HCT116 (cell line): ENCODE measurements at regions of chr2 and their contacts with region 1.

Region 1: DNA sequence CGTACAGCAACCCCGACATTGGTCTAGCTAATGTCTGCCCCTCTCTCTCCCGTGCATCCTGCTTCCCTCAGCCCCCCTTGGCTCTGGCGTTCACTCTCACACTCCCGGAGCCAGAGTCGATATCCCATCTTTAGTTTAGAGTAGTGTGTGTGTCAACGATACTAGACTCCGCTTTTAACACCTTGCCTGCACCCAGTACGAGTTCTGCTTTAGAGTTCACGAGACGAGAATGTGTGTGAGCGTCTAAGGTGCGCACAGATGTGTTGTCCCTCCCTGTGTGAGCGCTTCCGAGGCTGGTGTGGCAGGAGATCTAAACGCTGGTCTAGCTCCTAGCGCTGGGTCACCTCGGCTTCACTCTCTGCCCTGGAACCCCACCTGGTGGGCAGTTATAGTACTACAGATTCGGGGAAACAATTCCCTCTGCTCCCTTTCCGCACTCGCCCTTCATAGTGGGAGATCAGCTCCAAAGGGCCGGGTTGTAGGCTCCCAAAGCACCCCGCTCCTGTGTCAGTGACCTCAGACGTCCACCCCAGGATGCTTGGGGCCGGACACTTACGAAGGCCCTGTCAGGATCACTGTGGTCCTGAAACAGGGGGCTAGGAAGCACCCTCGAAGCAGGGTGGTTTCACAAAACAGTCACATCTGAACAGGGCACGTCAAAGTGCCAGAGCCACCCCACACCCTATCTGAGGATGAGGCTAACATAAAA is 2.6 kb upstream of the CYP26B1 start:
- DNase-seq: peak; percentile 63
- ATAC-seq: peak; percentile 75
- H3K4me3 ChIP-seq: no peak overlapping the region
- H3K27ac ChIP-seq: no peak overlapping the region
- H3K4me1 ChIP-seq: peaks cover 11 to 34% of the 10 kb centered on the region in 2 experiments; a peak in 3 of 4 replicates
- H3K27me3 ChIP-seq: no peaks in the 10 kb centered on the region
- CTCF ChIP-seq: peak; percentile 70 to 86 (median 77)
- POLR2A ChIP-seq: no peak
- RAD21 ChIP-seq: peak; percentile 95

Region 2: GRCh38 chr2:71545572-71546274 is 604.6 kb before region 1 on chr2:
- CTCF ChIA-PET with region 1: interaction called, 10 read pairs
- POLR2A ChIA-PET with region 1: no interaction called
- RAD21 ChIA-PET with region 1: interaction called in 1 of 2 experiments, 4 read pairs
- intact Hi-C with region 1: loop called (anchors 1 kb)
- DNase-seq: peak; percentile 57
- ATAC-seq: peak; percentile 89
- H3K4me3 ChIP-seq: peak overlapping the region; percentile 37 to 53
- H3K27ac ChIP-seq: peak overlapping the region; percentile 4; the same call in 1 of the 2 replicates
- H3K4me1 ChIP-seq: peaks cover 2 to 15% of the 10 kb centered on the region in 2 experiments; a peak in 3 of 4 replicates
- H3K27me3 ChIP-seq: no peaks in the 10 kb centered on the region
- CTCF ChIP-seq: peak; percentile 72 to 87 (median 84)
- POLR2A ChIP-seq: no peak
- RAD21 ChIP-seq: peak; percentile 92

Region 3: GRCh38 chr2:71876542-71877451 is 273.5 kb before region 1 on chr2:
- CTCF ChIA-PET with region 1: interaction called, 7 read pairs
- POLR2A ChIA-PET with region 1: no interaction called
- RAD21 ChIA-PET with region 1: no interaction called
- intact Hi-C with region 1: loop called (anchors 2 kb)
- DNase-seq: no peak
- ATAC-seq: no peak
- H3K4me3 ChIP-seq: no peak overlapping the region
- H3K27ac ChIP-seq: no peak overlapping the region
- H3K4me1 ChIP-seq: peaks cover 23 to 30% of the 10 kb centered on the region in 2 experiments
- H3K27me3 ChIP-seq: no peaks in the 10 kb centered on the region
- CTCF ChIP-seq: no peak
- POLR2A ChIP-seq: no peak
- RAD21 ChIP-seq: no peak

Region 4: DNA sequence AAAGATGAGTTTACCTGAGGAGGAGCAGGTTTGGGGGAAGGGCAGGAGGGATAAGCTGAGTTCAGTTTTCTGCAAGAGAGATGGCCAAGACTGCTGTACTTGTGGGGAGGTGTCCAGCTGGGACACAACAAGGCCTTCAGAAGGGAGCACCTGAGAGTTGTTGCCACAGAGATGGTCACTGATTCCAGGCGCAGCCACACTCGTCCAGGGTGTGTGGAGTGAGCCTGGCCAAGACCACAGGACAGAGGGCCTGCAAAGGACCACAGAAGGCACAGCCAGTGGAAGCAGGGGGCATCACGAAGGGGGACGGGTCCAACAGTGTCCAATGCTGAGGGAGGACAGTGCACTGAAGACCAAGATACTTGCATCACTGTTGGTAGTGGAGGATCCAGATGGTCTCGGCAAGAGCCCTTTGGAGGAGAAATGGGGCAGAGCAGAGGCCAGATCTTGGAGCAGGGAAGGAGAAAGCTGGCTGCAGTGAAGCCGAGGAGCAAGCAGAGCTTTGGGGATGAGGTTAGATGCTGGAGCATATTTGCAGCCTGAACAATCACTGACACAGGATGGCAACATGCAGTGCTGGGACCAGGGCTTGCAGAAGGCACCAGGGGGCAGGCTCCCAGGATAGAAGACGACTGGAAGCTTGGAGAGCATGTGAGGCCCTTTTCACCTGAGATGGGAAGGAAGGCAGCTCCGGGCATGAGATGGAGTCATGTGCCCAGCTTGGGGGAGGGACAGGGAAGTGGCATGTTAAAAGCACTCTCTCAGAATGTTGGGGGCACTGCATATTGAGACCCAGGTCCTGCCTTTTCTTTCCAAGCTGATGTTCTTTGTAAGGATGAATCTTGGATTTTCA is 216.6 kb before region 1 on chr2:
- CTCF ChIA-PET with region 1: interaction called, 15 read pairs
- POLR2A ChIA-PET with region 1: no interaction called
- RAD21 ChIA-PET with region 1: interaction called in 1 of 2 experiments, 5 read pairs
- intact Hi-C with region 1: no loop called
- DNase-seq: peak; percentile 28
- ATAC-seq: peak; percentile 88
- H3K4me3 ChIP-seq: no peak overlapping the region
- H3K27ac ChIP-seq: no peak overlapping the region
- H3K4me1 ChIP-seq: no peaks in the 10 kb centered on the region; a peak in 1 of 4 replicates
- H3K27me3 ChIP-seq: no peaks in the 10 kb centered on the region
- CTCF ChIP-seq: peak; percentile 36 to 59 (median 44); a peak in 4 of 6 replicates
- POLR2A ChIP-seq: no peak
- RAD21 ChIP-seq: peak; percentile 51

Region 5: DNA sequence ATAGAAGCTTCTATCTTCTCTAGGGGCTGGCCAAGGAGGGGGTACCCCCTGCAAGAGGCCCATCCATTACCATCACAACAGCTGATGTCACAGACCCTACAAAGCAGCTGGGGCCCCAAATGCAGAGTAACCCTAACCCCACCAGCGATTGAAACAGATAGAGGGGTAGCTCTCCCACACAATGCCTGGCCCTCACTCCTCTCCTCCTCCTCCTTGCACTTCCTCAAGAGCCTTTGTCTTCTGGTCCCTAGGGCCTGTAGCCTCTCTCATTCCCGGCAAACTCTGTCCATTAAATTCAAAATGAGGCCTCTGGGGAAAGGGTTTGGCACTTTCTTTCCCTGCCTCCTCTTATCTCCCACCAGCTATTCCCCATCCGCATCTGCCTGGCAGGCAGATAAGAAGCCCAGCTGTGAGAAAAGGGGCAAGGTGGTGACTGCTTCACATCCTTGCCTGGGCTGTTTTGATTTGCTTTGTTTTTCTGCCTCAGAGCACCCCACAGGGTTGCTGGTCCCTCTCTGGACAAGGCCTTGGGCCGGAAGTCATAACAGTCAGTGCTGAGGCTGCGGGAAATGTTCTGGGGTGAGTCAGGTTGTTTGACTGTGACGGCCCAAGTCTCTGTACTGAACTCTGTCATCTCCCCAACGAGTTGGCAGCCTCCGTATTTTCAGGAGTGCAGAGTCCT is 23.5 kb after region 1 on chr2:
- CTCF ChIA-PET with region 1: no interaction called
- POLR2A ChIA-PET with region 1: no interaction called
- RAD21 ChIA-PET with region 1: no interaction called
- intact Hi-C with region 1: no loop called
- DNase-seq: no peak
- ATAC-seq: no peak
- H3K4me3 ChIP-seq: no peak overlapping the region
- H3K27ac ChIP-seq: no peak overlapping the region
- H3K4me1 ChIP-seq: no peaks in the 10 kb centered on the region
- H3K27me3 ChIP-seq: no peaks in the 10 kb centered on the region
- CTCF ChIP-seq: no peak
- POLR2A ChIP-seq: no peak
- RAD21 ChIP-seq: no peak

Region 6: DNA sequence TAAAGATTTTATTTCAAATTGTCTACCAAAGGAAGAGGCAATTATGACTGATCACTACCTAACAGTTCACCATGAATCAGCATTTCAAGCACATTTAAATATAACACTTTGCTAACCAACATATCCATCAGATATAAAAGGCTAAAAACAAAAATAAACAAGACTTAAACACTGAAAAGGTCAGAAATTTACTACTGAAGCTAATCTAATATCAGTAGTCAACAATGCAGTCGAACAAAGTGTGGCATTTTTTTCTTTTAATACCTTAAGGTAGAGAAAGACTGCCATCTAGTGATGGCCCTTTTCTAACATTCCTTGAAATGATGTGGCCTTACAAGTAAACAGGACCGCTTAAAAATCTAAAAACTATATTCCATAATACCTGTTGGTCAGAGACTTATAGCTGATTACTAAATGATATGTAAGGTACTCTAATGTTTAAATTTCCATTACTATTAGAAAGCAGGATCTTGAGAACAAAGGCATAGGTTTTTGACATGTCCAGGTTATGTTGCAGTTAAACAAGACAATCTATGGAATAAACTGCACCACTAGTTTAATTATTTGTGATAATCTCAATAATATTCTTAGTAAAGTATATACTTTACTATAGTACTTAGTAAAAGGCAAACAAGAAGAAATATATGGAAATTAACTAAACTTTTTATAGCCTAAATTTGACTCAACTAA is 595.5 kb after region 1 on chr2:
- CTCF ChIA-PET with region 1: interaction called, 3 read pairs
- POLR2A ChIA-PET with region 1: no interaction called
- RAD21 ChIA-PET with region 1: no interaction called
- intact Hi-C with region 1: loop called (anchors 2 kb)
- DNase-seq: peak; percentile 48
- ATAC-seq: peak; percentile 50
- H3K4me3 ChIP-seq: no peak overlapping the region
- H3K27ac ChIP-seq: no peak overlapping the region
- H3K4me1 ChIP-seq: peaks cover 0 to 3% of the 10 kb centered on the region in 2 experiments; a peak in 1 of 4 replicates
- H3K27me3 ChIP-seq: no peaks in the 10 kb centered on the region
- CTCF ChIP-seq: peak; percentile 50 to 85 (median 59); a peak in 5 of 6 replicates
- POLR2A ChIP-seq: no peak
- RAD21 ChIP-seq: peak; percentile 79